Common myeloid progenitor, CD34-positive (primary cell): ENCODE measurements at regions of chr17 and their contacts with region 1.

Region 1: GRCh38 chr17:7650509-7651096 is at the start of gene ATP1B2:
- DNase-seq: peak; percentile 81 to 86 (median 83)
- H3K4me3 ChIP-seq: peak within 1 kb of the TSS; percentile 16 to 73 (median 51)
- H3K27ac ChIP-seq: no peak within 1 kb of the TSS
- H3K4me1 ChIP-seq: peaks cover 0 to 18% (median 15%) of the 10 kb centered on the region in 4 experiments
- H3K27me3 ChIP-seq: peaks cover 0 to 47% (median 31%) of the 10 kb centered on the region in 5 experiments

Region 2: DNA sequence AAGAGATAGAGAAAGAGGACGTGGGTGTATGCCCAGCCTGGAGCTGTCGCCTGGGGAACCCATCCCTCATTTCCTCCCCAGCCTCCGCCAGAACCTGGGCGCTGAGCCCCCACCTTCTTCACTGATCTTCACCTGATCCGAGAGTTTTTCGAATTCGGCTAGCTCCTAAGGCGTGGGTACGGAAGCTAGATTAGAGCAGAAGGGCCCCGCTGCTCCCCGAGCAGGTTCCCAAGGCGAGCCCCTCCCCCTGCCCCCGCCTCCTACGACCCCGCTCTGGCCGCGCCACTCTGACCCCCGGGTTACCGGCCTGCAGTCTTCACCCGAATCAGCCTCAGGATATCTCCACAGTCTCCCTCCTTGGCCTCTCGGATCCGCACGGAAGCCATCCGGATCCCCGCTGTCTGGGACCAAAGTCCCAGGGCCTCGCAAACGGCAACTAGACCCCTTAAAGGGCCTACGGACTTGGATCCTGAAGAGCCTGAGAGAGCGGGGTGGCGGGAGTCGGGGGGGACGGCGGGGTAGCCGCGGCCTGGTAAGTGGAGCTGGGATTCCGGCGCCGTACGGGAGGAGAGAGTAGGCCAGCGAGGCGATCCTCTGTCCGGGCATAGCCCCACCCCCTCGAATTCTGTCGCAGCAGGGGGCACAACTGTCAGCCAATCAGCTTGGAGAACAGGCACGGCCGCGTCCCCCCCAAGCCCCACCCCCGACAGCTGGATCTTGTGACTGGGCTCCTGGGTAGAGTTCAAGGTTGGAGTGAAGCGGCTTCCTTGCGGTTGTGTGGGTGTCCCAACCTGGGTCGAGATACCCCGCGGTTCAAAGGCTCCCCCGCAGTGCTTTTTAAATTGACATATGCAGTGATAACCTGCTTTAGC is 23.1 kb before region 1 on chr17 and contains the start of gene SAT2:
- CTCF ChIA-PET with region 1: interaction called, 28 read pairs
- POLR2A ChIA-PET with region 1: interaction called, 10 read pairs
- DNase-seq: peak; percentile 91 to 95 (median 94)
- H3K4me3 ChIP-seq: peak within 1 kb of the TSS; percentile 52 to 89 (median 83)
- H3K27ac ChIP-seq: peak within 1 kb of the TSS; percentile 85 to 93
- H3K4me1 ChIP-seq: peaks cover 0 to 12% (median 10%) of the 10 kb centered on the region in 4 experiments
- H3K27me3 ChIP-seq: no peaks in the 10 kb centered on the region